Dorsolateral prefrontal cortex (tissue), 120 donors: ENCODE measurements at regions of chr19 and their contacts with region 1.

Region 1: GRCh38 chr19:45886427-45887199 is 672 bp upstream of the IRF2BP1 start:
- DNase-seq: peak; percentile 86 to 93 (median 90)
- H3K4me3 ChIP-seq: peak overlapping the region; percentile 61 to 97 (median 83)
- H3K27ac ChIP-seq: peak overlapping the region; percentile 62 to 97 (median 89)
- H3K27me3 ChIP-seq: no peaks in the 10 kb centered on the region
- CTCF ChIP-seq: peak in 17 of 56 donors; percentile 2 to 35 (median 14)

Region 2: DNA sequence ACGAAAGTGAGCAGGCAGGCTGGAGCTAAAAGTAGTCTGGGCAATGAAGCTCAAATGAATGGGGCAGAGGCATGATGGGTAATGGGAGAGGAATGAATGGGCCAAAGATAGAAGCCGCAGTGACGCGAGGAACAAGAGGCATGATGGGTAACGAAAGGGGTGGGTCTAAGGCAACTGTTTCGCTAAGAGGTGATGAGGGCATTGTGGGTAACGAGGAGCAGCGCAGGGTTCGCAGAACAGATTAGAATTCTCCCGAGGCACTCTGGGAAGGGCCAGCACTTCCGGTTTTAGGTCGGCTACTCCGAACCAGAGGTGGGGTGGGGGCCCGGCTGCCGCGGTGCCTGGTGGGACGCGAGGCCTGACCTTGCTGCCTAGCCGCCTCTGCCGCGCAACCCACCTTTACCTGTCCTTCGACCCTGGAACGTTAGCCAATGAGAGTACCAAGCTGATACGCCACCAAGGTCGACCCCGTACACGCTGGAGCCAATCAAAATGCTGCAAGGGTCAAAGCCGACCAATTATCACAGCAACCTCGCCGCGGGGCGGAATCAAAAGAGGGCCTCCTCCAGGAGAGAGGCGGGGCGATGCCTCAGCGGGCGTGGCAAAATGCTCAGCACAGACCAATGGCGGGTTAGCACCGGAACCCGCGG is 996.1 kb before region 1 on chr19:
- intact Hi-C with region 1: loop called in 1 of 2 experiments (anchors 5 kb)
- DNase-seq: peak in 7 of 10 donors; percentile 99 to 100 (median 100)
- H3K4me3 ChIP-seq: peak overlapping the region; percentile 51 to 99 (median 74)
- H3K27ac ChIP-seq: peak overlapping the region; percentile 58 to 99 (median 93)
- H3K27me3 ChIP-seq: no peaks in the 10 kb centered on the region
- CTCF ChIP-seq: peak in 20 of 56 donors; percentile 7 to 42 (median 24)

Region 3: GRCh38 chr19:45862564-45863334 is 23.9 kb before region 1 on chr19 and contains the start of gene SYMPK:
- intact Hi-C with region 1: loop called (anchors 1 kb)
- DNase-seq: peak; percentile 97 to 99 (median 99)
- H3K4me3 ChIP-seq: peak within 1 kb of the TSS; percentile 73 to 99 (median 93)
- H3K27ac ChIP-seq: peak within 1 kb of the TSS; percentile 53 to 97 (median 91)
- H3K27me3 ChIP-seq: peaks cover 0 to 26% (median 15%) of the 10 kb centered on the region in 45 donors
- CTCF ChIP-seq: peak in 39 of 56 donors; percentile 7 to 60 (median 34)
- total RNA-seq, gene SYMPK: 65.0 to 119 (median 87.1) TPM

Region 4: DNA sequence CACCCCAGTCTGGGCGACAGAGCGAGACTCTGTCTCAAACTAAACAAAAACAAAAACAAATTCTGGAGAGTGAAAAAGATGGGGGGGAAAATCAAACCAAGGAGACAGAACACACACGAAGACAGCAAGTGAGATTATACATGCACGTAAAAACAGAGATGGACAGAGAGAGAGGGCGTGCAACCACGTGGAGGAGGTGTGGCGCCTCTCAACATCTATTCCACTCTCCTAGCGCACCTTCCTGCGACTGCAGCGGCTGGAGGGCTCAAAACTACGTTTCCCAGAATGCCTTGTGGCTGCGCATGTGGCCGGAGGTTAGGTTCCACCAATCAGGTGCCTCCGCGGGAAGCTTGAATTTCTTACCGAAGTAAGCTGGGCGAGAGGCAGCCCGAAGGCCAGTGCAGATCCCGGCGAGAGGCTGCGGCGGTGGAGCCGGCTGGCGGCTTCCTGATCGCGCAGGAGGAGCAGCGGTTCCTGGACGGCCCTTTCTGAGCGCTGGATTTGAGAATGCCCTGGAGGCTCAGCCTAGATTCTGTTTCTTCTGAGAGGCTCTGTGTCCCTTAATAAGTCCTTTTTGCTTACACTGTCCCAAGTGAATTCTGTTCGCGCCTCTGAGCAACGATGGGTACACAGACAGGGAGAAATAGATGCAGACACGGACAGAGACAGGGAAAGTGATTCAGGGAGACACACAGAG is 41.1 kb after region 1 on chr19:
- intact Hi-C with region 1: loop called in 1 of 2 experiments (anchors 2 kb)
- DNase-seq: peak; percentile 77 to 94 (median 90)
- H3K4me3 ChIP-seq: peak overlapping the region in 53 of 59 donors; percentile 1 to 58 (median 36)
- H3K27ac ChIP-seq: peak overlapping the region in 1 of 59 donors; percentile 44
- H3K27me3 ChIP-seq: no peaks in the 10 kb centered on the region
- CTCF ChIP-seq: peak in 36 of 56 donors; percentile 8 to 50 (median 28)

Region 5: GRCh38 chr19:46016426-46017094 is 129.9 kb after region 1 on chr19:
- intact Hi-C with region 1: loop called in 1 of 2 experiments (anchors 5 kb)
- DNase-seq: peak; percentile 63 to 84 (median 72)
- H3K4me3 ChIP-seq: peak overlapping the region; percentile 45 to 81 (median 66)
- H3K27ac ChIP-seq: peak overlapping the region in 33 of 59 donors; percentile 2 to 76 (median 36)
- H3K27me3 ChIP-seq: peaks cover 0 to 8% (median 0%) of the 10 kb centered on the region in 45 donors
- CTCF ChIP-seq: peak; percentile 27 to 95 (median 86)